A549 (cell line): ENCODE measurements at regions of chr22 and their contacts with region 1.

Region 1: GRCh38 chr22:38872172-38872830 is at the start of gene CBX6:
- DNase-seq: peak; percentile 86 to 91
- ATAC-seq: peak; percentile 65 to 72
- H3K4me3 ChIP-seq: peak within 1 kb of the TSS; percentile 88
- H3K27ac ChIP-seq: peak within 1 kb of the TSS; percentile 99 to 100
- H3K4me1 ChIP-seq: peaks cover 23% of the 10 kb centered on the region
- CTCF ChIP-seq: no peak
- EP300 ChIP-seq: peak in 1 of 2 experiments; percentile 15; a peak in 1 of 5 replicates
- POLR2A ChIP-seq: peak; percentile 51
- RAD21 ChIP-seq: no peak
- polyA plus RNA-seq, gene CBX6: 9.8 and 10.4 TPM in 2 replicates

Region 2: GRCh38 chr22:38831166-38831945 is 40.9 kb before region 1 on chr22:
- CTCF ChIA-PET with region 1: interaction called, 18 read pairs
- POLR2A ChIA-PET with region 1: no interaction called
- DNase-seq: peak in 1 of 2 experiments; percentile 59
- ATAC-seq: peak in 1 of 2 experiments; percentile 79; a peak in 3 of 6 replicates
- H3K4me3 ChIP-seq: no peak overlapping the region
- H3K27ac ChIP-seq: peak overlapping the region; percentile 82 to 90
- H3K4me1 ChIP-seq: peaks cover 48% of the 10 kb centered on the region
- CTCF ChIP-seq: no peak
- EP300 ChIP-seq: peak; percentile 33 to 40; a peak in 1 of 5 replicates
- POLR2A ChIP-seq: no peak
- RAD21 ChIP-seq: no peak

Region 3: GRCh38 chr22:38850941-38851849 is 21.1 kb before region 1 on chr22:
- CTCF ChIA-PET with region 1: interaction called, 38 read pairs
- POLR2A ChIA-PET with region 1: no interaction called
- DNase-seq: peak; percentile 36 to 59
- ATAC-seq: peak; percentile 79 to 87
- H3K4me3 ChIP-seq: no peak overlapping the region
- H3K27ac ChIP-seq: peak overlapping the region; percentile 56 to 82; a peak in 5 of 6 replicates
- H3K4me1 ChIP-seq: peaks cover 18% of the 10 kb centered on the region
- CTCF ChIP-seq: no peak
- EP300 ChIP-seq: no peak
- POLR2A ChIP-seq: no peak
- RAD21 ChIP-seq: no peak

Region 4: DNA sequence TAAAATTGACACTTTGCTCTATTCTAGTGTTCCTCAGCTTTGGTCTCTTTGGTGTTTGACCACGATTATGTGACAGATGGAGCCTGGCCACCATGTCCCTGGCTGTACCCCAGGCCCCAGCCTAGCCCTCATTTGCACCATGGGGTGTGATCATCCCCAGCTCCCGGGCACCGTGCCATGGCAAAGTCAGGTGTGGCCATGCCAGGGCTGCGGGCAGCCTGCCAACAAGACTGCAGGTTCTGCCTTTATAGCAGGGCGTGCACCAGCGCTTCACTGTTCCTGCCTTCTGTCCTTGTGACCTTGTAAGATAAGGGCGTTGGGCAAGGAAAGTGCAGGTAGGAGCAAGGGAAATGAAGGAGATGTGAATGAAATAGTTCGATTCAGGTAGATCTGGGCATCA is 62.7 kb after region 1 on chr22:
- CTCF ChIA-PET with region 1: interaction called, 18 read pairs
- POLR2A ChIA-PET with region 1: no interaction called
- DNase-seq: peak in 1 of 2 experiments; percentile 39
- ATAC-seq: no peak
- H3K4me3 ChIP-seq: no peak overlapping the region
- H3K27ac ChIP-seq: no peak overlapping the region
- H3K4me1 ChIP-seq: peaks cover 11% of the 10 kb centered on the region
- CTCF ChIP-seq: no peak
- EP300 ChIP-seq: no peak
- POLR2A ChIP-seq: no peak
- RAD21 ChIP-seq: no peak

Region 5: GRCh38 chr22:38981992-38982927 is 110.0 kb after region 1 on chr22 and contains the start of gene APOBEC3B:
- CTCF ChIA-PET with region 1: interaction called, 6 read pairs
- POLR2A ChIA-PET with region 1: interaction called, 18 read pairs
- DNase-seq: peak; percentile 85 to 91
- ATAC-seq: peak; percentile 98 to 99
- H3K4me3 ChIP-seq: peak within 1 kb of the TSS; percentile 45
- H3K27ac ChIP-seq: peak within 1 kb of the TSS; percentile 75 to 95
- H3K4me1 ChIP-seq: peaks cover 13% of the 10 kb centered on the region; the same call in 2 of the 3 replicates
- CTCF ChIP-seq: no peak
- EP300 ChIP-seq: no peak
- POLR2A ChIP-seq: no peak
- RAD21 ChIP-seq: no peak
- polyA plus RNA-seq, gene APOBEC3B: 14.7 and 16.7 TPM in 2 replicates

Region 6: DNA sequence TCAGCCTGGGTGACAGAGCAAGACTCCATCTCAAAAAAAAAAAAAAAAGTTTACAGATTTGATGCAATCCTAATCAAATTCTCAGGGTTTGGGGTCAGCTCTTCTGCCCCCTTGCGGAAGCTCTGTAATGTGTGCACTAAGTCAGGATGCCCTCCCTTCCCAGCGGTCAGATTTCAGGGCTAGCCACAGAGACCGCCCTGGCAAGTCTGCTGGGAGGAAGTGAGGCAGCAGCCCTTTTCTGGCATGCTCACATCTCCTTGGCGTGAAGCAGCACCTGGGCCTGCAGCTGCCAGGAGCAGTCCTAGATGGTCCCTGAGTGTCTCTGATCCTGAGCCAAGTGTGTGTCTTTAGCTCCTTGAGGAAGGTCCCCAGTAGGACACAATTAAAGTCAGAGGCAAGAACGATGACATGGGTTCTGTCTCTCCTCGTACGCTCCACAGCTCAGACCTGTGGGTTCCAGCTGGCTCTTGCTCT is 130.9 kb after region 1 on chr22:
- CTCF ChIA-PET with region 1: interaction called, 64 read pairs
- POLR2A ChIA-PET with region 1: interaction called, 3 read pairs
- DNase-seq: peak; percentile 68 to 74
- ATAC-seq: peak; percentile 95 to 97
- H3K4me3 ChIP-seq: no peak overlapping the region
- H3K27ac ChIP-seq: peak overlapping the region in 1 of 2 experiments; percentile 29; a peak in 2 of 6 replicates
- H3K4me1 ChIP-seq: peaks cover 3% of the 10 kb centered on the region; the same call in 1 of the 3 replicates
- CTCF ChIP-seq: peak; percentile 64
- EP300 ChIP-seq: no peak
- POLR2A ChIP-seq: no peak
- RAD21 ChIP-seq: peak; percentile 63 to 71